Right cardiac atrium (tissue), 5 donors: ENCODE measurements at regions of chr2 and their contacts with region 1.

Region 1: GRCh38 chr2:25127646-25128045 is 40.7 kb downstream of the POMC start:
- DNase-seq: peak in 1 of 3 donors; percentile 42
- ATAC-seq: no peak
- H3K4me3 ChIP-seq: no peak overlapping the region
- H3K27ac ChIP-seq: no peak overlapping the region
- H3K4me1 ChIP-seq: no peaks in the 10 kb centered on the region
- H3K27me3 ChIP-seq: no peaks in the 10 kb centered on the region

Region 2: GRCh38 chr2:24971536-24972314 is 155.9 kb before region 1 on chr2 and contains the start of gene DNAJC27:
- intact Hi-C with region 1: loop called in 3 of 4 experiments (anchors 2 to 5 kb)
- DNase-seq: peak; percentile 98 to 99 (median 99)
- ATAC-seq: peak; percentile 97
- H3K4me3 ChIP-seq: peak within 1 kb of the TSS; percentile 87
- H3K27ac ChIP-seq: peak within 1 kb of the TSS; percentile 97
- H3K4me1 ChIP-seq: no peaks in the 10 kb centered on the region
- H3K27me3 ChIP-seq: no peaks in the 10 kb centered on the region
- total RNA-seq, gene DNAJC27: 8.7 to 10.4 (median 9.5) TPM

Region 3: DNA sequence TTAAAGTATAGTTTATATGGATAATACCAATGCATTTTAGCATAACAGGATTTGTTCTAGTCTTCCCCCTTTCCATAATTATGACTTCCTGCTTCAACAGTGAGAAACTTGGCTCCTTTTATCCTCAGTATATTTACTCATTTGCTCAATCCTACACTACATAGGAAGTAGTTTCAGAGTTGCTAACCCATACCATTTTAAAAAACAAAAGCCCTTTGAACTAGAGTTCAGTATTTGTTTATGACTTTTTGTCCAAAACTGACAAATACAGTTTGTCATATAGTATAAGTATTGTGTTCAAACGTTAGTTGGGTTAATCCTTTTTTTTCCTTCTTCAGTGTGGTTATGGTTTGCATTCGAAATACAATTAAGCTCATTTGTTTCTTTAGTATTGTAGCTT is 150.0 kb before region 1 on chr2:
- intact Hi-C with region 1: loop called (anchors 2 to 5 kb)
- DNase-seq: no peak
- ATAC-seq: no peak
- H3K4me3 ChIP-seq: no peak overlapping the region
- H3K27ac ChIP-seq: no peak overlapping the region
- H3K4me1 ChIP-seq: no peaks in the 10 kb centered on the region
- H3K27me3 ChIP-seq: no peaks in the 10 kb centered on the region

Region 4: DNA sequence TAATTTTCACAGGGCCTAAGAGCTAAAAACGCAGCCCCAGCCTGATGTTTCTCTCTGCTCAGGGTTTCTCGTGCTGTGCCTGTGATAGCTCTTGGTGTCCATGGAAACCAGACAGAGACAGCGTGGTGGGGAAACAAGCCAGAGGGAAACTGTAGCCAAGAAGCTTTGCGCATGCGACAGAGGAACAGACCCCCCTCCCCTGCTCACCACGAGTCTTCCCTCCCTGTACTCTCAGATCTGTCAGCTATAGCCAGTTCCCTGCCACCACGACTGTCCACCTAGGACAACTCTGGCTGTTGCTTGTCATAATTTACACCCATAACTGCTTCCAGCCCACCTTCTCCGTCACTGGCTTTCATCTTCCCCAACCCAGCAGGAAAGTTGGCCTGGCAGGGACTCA is 142.7 kb before region 1 on chr2:
- intact Hi-C with region 1: loop called in 1 of 4 experiments (anchors 5 kb)
- DNase-seq: peak; percentile 56 to 89 (median 82)
- ATAC-seq: peak; percentile 90 to 91
- H3K4me3 ChIP-seq: no peak overlapping the region
- H3K27ac ChIP-seq: peak overlapping the region; percentile 83
- H3K4me1 ChIP-seq: no peaks in the 10 kb centered on the region
- H3K27me3 ChIP-seq: no peaks in the 10 kb centered on the region

Region 5: DNA sequence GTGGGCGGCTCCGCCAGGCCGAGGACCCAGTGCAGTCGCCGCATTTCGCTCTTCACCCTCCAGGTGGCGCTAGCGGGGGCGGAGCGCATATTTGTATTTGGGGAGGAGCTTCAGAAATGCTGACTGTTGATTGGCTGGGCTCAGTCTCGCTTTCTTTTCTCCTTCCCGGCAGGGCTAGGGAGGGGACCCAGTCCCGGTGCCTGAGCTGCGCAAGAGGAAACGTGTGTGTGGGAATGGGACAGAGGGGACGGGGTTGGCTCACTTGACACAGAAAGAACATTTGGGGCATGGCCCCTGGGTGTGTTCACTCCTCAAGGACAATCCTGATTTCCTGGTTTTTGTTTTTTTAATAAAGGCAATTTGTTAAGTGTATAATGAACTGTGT is 234.4 kb after region 1 on chr2:
- intact Hi-C with region 1: no loop called
- DNase-seq: peak; percentile 88 to 96 (median 94)
- ATAC-seq: peak; percentile 98 to 99
- H3K4me3 ChIP-seq: peak overlapping the region; percentile 20
- H3K27ac ChIP-seq: peak overlapping the region; percentile 4
- H3K4me1 ChIP-seq: no peaks in the 10 kb centered on the region
- H3K27me3 ChIP-seq: no peaks in the 10 kb centered on the region